Activated CD8-positive, alpha-beta T cell treated with anti-CD3 and anti-CD28 coated beads for 36 hours (primary cell): ENCODE measurements at regions of chr12 and their contacts with region 1.

Region 1: DNA sequence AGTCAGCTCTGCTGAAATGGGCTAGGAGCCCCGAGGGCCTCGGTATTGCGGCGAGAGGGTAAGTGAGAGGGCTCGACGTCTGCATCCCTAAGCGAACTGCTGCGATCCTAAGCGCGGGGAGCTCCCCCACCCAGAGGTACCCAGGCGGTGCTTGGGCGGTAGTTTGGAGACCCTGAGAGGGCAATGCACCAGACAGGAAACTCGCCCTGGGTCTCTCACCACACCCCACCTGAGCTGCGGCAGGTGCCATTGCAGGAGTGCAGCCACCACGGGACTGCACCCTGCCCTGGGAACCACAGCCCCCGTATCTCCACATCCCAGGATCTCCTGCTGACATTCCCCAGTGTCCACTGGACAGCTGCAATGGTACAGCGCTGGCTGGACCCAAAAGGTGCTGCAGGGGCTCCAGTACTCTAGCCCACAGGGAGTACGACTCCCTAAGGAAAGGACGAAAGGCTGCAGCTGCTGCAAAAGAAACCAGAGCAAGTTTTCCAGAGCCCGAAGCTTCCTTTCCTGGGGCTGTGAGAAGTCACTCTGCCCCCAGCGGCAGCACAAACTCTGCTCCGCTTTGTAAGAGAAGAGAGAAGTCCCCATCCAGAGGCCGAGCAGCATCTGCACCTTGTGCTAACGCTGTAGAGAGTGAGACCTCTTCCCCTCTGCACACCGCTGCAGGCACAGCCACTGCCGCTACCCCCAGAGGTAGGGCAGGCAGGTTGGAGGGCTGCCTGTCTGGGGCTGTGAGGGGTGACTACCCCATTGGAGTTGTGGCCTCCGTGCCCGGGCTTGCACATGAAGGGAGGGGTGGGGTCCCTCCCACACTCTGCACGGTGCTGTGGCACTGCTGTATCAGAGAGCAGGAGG is 31.1 kb upstream of the MON2 start:
- DNase-seq: peak; percentile 66
- ATAC-seq: peak; percentile 86
- H3K4me3 Mint-ChIP-seq: peak overlapping the region; percentile 68
- H3K27ac Mint-ChIP-seq: no peak overlapping the region
- H3K4me1 Mint-ChIP-seq: peaks cover 6% of the 10 kb centered on the region
- H3K27me3 Mint-ChIP-seq: peaks cover 20% of the 10 kb centered on the region
- CTCF ChIP-seq: peak; percentile 63

Region 2: DNA sequence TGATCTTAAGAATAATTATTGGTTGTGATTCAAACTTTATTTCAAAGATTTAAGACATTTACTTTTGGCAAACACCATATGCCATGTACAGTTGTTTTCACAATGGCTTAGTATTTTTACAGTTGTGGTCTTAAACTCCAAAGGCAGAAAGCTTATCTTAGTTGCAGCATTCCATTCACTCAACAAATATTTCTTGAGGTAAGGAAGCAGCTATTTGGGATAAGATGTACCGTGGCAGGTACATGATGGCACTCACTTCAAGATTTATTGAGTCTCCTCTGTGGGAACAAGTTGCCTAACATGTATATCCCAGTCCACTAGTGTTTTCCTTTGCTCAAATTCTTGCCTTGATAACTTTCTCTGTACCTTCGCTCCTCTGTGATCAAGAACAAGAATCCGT is 23.1 kb after region 1 on chr12:
- CTCF ChIA-PET with region 1: interaction called, 31 read pairs
- POLR2A ChIA-PET with region 1: no interaction called
- intact Hi-C with region 1: no loop called
- DNase-seq: no peak
- ATAC-seq: no peak
- H3K4me3 Mint-ChIP-seq: no peak overlapping the region
- H3K27ac Mint-ChIP-seq: no peak overlapping the region
- H3K4me1 Mint-ChIP-seq: no peaks in the 10 kb centered on the region
- H3K27me3 Mint-ChIP-seq: peaks cover 3% of the 10 kb centered on the region
- CTCF ChIP-seq: no peak

Region 3: GRCh38 chr12:62522984-62523383 is 87.5 kb after region 1 on chr12:
- CTCF ChIA-PET with region 1: interaction called, 10 read pairs
- POLR2A ChIA-PET with region 1: interaction called, 3 read pairs
- intact Hi-C with region 1: no loop called
- DNase-seq: no peak
- ATAC-seq: peak; percentile 84
- H3K4me3 Mint-ChIP-seq: no peak overlapping the region
- H3K27ac Mint-ChIP-seq: no peak overlapping the region
- H3K4me1 Mint-ChIP-seq: peaks cover 26% of the 10 kb centered on the region
- H3K27me3 Mint-ChIP-seq: no peaks in the 10 kb centered on the region
- CTCF ChIP-seq: no peak

Region 4: GRCh38 chr12:62799126-62799736 is 363.7 kb after region 1 on chr12:
- CTCF ChIA-PET with region 1: interaction called, 128 read pairs
- POLR2A ChIA-PET with region 1: no interaction called
- intact Hi-C with region 1: loop called (anchors 1 kb)
- DNase-seq: peak; percentile 77
- ATAC-seq: peak; percentile 99
- H3K4me3 Mint-ChIP-seq: no peak overlapping the region
- H3K27ac Mint-ChIP-seq: no peak overlapping the region
- H3K4me1 Mint-ChIP-seq: no peaks in the 10 kb centered on the region
- H3K27me3 Mint-ChIP-seq: peaks cover 3% of the 10 kb centered on the region
- CTCF ChIP-seq: peak; percentile 95